Right ventricle myocardium superior (tissue), 1 donor: ENCODE measurements at regions of chr5 and their contacts with region 1.

Region 1: DNA sequence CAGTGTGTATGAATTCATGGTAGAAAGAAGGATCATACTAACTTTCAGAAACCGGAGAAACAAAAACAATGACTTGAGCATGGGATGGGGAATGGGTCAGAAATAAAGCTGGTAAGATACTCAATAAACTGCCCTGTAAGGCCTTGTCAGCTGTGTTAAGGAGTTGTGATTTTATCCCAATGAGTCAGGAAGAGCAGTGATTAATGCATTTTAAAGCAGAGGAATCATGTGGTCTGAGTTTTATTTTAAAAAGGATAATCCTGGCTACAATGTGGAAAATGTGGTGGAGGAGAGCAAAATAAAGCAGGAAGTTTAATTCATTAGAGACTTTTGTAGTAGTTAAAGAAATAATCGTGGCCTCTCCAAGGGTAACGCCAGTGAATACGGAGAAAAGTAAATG is 28.7 kb downstream of the DHX29 start:
- DNase-seq: no peak
- ATAC-seq: no peak

Region 2: DNA sequence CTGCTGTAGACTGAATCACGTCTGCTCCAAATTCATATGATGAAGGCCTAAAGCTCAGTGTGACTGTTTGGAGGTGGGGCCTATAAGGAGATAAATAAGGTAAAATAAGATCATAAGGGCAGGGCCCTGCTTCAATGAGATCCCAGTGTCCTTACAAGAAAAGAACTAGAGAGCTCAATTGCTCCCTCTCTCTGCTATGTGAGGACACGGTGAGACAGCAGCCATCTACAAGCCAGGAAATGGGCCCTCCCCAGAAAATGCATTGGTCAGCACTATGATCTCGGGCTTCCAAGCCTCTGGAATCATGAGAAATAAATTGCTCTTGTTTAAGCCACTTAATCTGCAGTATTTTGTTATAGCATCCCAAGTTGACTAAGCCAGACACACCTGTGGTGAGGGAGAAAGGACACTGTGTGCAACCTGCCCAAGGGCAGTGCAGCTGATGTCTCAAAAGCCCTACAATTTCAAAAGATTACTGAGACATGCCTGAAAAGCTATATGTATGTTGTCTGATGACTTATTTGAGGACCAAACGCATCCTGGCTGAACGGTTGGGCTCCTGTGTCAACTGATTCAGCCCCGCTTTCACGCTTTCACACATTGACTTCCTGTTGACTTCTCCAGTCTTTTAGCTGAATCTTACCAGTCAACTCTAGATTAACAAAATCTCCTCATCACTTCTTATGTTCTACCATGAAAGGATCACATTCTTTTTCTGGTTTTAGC is 241.6 kb before region 1 on chr5:
- intact Hi-C with region 1: no loop called
- DNase-seq: no peak
- ATAC-seq: no peak

Region 3: GRCh38 chr5:55344392-55344992 is 65.7 kb after region 1 on chr5:
- intact Hi-C with region 1: loop called (anchors 10 kb)
- DNase-seq: no peak
- ATAC-seq: no peak

Region 4: DNA sequence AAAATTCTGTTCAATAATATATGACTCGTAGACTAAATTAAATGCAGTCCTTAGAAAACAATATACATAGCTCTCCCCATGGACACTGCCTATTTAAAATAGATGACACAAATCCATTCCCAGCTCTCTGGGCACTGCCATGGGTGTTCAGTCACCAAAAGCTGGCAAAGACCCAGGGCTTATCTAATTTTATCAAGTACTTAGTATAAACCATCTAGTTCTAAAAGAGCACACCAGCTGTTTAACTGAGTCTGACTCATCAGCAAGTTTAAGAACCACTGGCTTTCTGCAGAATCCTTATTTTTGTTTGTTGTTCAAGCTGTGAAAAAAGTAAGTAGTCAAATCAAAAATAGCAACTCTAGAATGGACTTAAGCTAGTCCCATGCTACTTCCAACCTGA is 148.4 kb after region 1 on chr5:
- intact Hi-C with region 1: no loop called
- DNase-seq: no peak
- ATAC-seq: peak; percentile 83